MCF 10A (cell line): ENCODE measurements at regions of chr10 and their contacts with region 1.

Region 1: GRCh38 chr10:86782701-86783418 is 26.4 kb downstream of the BMPR1A start:
- DNase-seq: no peak
- H3K4me3 Mint-ChIP-seq: no peak overlapping the region
- H3K27ac Mint-ChIP-seq: no peak overlapping the region
- H3K4me1 Mint-ChIP-seq: peaks cover 6% of the 10 kb centered on the region
- H3K27me3 Mint-ChIP-seq: no peaks in the 10 kb centered on the region
- CTCF ChIP-seq: no peak

Region 2: DNA sequence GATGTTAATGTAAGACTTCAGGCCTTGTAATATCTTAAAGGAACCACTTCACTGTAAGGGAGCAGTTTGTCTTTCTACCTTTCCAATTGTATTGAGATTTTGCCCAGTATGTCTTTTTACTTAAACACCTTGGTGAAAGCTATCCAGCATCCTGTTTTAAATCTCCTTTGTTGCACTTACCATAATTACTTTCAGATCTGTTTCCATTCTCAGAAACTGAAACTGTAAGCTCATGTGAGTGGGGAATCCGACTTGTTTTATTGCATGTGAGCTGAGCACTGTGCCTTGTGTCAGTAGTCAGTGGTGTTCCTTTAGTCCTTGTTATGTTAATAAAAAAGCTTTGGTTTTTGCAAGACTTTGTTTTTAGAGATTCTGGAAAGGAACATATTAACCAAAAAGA is 15.8 kb after region 1 on chr10:
- CTCF ChIA-PET with region 1: no interaction called
- POLR2A ChIA-PET with region 1: interaction called, 3 read pairs
- intact Hi-C with region 1: loop called (anchors 1 kb)
- DNase-seq: no peak
- H3K4me3 Mint-ChIP-seq: no peak overlapping the region
- H3K27ac Mint-ChIP-seq: no peak overlapping the region
- H3K4me1 Mint-ChIP-seq: peaks cover 19% of the 10 kb centered on the region
- H3K27me3 Mint-ChIP-seq: no peaks in the 10 kb centered on the region
- CTCF ChIP-seq: no peak